ENCODE measurements at regions of chr1 and their contacts with region 1.

Region 1: DNA sequence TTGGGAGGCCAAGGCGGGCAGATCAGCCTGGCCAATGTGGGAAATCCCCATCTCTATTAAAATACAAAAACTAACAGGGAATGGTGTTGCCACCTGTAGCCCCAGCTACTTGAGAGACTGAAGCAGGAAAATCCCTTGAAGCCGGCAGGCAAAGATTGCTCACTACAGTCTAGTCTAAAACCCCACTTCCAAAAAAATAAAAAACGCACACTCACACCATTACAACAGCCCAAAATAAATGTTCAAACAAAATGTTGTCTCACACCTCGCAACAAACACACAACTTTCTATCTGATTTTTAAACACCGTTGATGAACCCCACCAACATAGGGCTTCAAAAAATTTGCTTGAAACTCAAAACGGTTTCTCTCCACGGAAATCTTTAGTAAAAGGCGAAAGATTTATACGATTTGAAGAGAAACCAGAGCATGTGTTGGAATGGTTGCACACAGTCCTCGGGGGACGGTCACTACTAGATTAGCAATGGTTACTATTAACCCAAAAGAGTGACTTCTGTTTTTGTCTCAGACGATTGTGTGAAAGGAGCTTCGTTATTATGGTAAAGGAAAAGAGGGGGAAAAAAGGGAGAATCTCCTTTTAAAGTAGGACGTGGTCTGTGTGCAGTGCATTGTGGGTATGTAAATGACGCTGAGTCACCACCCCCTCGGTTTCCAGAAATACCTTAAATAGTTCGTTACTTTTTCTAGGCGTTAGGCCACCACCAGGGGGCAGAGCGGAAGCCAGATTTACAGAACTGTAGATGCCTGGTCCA is at the start of gene RNU5D-1:
- DNase-seq: peak; percentile 97
- ATAC-seq: peak; percentile 74
- H3K4me3 ChIP-seq: peak within 1 kb of the TSS; percentile 17 to 68 (median 50)
- H3K4me3 Mint-ChIP-seq: peak within 1 kb of the TSS; percentile 92
- H3K27ac ChIP-seq: peak within 1 kb of the TSS; percentile 93 to 96
- H3K27ac Mint-ChIP-seq: peak within 1 kb of the TSS; percentile 100
- H3K4me1 ChIP-seq: peaks cover 12 to 24% of the 10 kb centered on the region in 2 donors
- H3K4me1 Mint-ChIP-seq: peaks cover 24% of the 10 kb centered on the region
- H3K27me3 ChIP-seq: no peaks in the 10 kb centered on the region
- H3K27me3 Mint-ChIP-seq: no peaks in the 10 kb centered on the region
- CTCF ChIP-seq: peak; percentile 87
- total RNA-seq, gene RNU5D-1: not detected in 2 replicates

Region 2: GRCh38 chr1:44598167-44598566 is 132.8 kb before region 1 on chr1:
- CTCF ChIA-PET with region 1: no interaction called
- POLR2A ChIA-PET with region 1: no interaction called
- intact Hi-C with region 1: no loop called
- DNase-seq: no peak
- ATAC-seq: no peak
- H3K4me3 ChIP-seq: no peak overlapping the region
- H3K4me3 Mint-ChIP-seq: no peak overlapping the region
- H3K27ac ChIP-seq: no peak overlapping the region
- H3K27ac Mint-ChIP-seq: no peak overlapping the region
- H3K4me1 ChIP-seq: peaks cover 0 to 3% of the 10 kb centered on the region in 2 donors
- H3K4me1 Mint-ChIP-seq: no peaks in the 10 kb centered on the region
- H3K27me3 ChIP-seq: no peaks in the 10 kb centered on the region
- H3K27me3 Mint-ChIP-seq: peaks cover 7% of the 10 kb centered on the region
- CTCF ChIP-seq: no peak

Region 3: DNA sequence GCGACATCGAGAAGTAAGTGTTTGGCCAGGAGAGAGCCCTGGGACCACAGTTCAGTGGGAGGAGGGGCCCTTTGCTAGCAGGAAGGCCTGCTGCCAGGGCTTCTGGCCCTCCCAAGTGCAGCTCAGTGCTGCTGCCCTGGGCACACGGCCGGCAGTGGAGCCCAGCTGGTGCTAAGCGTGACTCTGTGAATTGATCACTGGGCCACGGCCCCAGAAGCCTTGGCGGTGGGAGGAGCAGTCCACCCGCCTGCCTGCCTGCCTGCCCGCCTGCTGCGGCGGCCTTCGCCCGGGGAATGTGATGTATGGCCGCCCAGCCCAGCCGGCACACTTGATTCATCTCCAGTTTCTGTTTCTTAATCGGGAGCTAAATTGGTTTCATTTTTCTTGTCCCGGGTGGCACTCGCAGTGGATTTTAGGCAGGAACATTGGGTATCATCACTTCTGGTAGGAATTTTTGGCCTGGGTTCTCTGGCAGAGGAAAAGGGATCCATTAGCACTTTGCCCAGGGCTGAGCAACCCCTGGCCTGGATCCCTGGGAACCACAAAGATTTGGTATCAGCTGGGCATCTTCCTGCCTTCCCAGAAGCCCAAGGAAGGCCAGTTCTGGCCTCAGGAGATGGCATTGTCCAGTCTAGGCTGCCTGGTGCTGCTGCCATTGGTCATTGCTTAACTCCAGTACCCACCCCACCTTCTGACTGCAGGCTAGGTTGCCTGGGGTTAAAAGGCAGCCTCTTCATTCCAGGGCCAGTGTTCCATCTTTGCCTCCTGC is 85.3 kb before region 1 on chr1:
- CTCF ChIA-PET with region 1: no interaction called
- POLR2A ChIA-PET with region 1: no interaction called
- intact Hi-C with region 1: no loop called
- DNase-seq: no peak
- ATAC-seq: no peak
- H3K4me3 ChIP-seq: no peak overlapping the region
- H3K4me3 Mint-ChIP-seq: no peak overlapping the region
- H3K27ac ChIP-seq: no peak overlapping the region
- H3K27ac Mint-ChIP-seq: no peak overlapping the region
- H3K4me1 ChIP-seq: no peaks in the 10 kb centered on the region
- H3K4me1 Mint-ChIP-seq: no peaks in the 10 kb centered on the region
- H3K27me3 ChIP-seq: no peaks in the 10 kb centered on the region
- H3K27me3 Mint-ChIP-seq: no peaks in the 10 kb centered on the region
- CTCF ChIP-seq: no peak

Region 4: DNA sequence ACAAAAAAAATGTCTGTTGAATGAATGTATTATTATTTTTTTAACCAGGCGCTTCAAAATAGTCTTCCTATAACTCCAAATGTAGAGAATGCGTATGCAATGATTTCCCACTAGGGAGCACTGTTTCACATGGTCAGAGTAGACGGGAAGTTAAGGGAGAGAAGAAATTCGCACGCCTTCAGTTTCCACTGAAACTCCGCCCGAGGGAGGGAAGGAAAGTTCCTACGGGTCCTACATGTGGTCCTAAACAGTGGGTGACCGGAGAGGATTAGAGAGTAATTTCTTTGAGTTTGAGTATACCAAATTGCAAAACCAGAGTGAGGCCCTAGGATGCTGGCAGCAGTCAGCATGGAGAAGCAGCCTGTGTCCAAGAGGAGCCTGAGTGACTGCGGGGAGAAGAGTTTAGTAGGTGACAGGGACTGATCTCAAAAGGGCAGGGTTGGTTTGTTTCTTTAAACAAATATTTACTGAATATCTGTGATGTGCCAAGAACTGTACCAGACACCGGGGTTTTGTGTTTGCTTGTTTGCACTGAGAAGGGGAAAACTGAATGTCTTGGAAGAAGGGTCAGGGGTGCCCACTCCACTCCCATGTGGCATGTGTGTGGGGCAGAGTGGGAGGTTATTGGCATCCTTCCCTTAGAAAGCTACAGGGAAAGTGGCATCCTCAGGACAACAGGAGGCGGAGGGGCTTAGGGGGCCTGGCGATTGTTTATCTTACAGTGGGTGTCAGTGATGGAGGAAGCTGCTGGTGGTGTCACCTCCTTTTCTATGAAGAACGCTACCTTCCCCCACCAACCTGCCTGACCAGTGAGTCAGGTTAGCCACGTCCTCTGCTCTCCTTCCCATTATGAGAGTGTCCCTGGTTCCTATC is 22.7 kb before region 1 on chr1:
- CTCF ChIA-PET with region 1: interaction called, 196 read pairs
- POLR2A ChIA-PET with region 1: interaction called, 20 read pairs
- intact Hi-C with region 1: loop called (anchors 1 kb)
- DNase-seq: peak; percentile 76
- ATAC-seq: peak; percentile 76
- H3K4me3 ChIP-seq: peak overlapping the region in 4 of 5 experiments; percentile 9 to 26 (median 14)
- H3K4me3 Mint-ChIP-seq: peak overlapping the region; percentile 59
- H3K27ac ChIP-seq: no peak overlapping the region
- H3K27ac Mint-ChIP-seq: peak overlapping the region; percentile 54
- H3K4me1 ChIP-seq: peaks cover 27 to 30% of the 10 kb centered on the region in 2 donors
- H3K4me1 Mint-ChIP-seq: peaks cover 25% of the 10 kb centered on the region
- H3K27me3 ChIP-seq: no peaks in the 10 kb centered on the region
- H3K27me3 Mint-ChIP-seq: no peaks in the 10 kb centered on the region
- CTCF ChIP-seq: peak; percentile 85

Region 5: GRCh38 chr1:44714944-44715571 is 15.9 kb before region 1 on chr1:
- CTCF ChIA-PET with region 1: interaction called, 196 read pairs
- POLR2A ChIA-PET with region 1: interaction called, 20 read pairs
- intact Hi-C with region 1: loop called (anchors 1 kb)
- DNase-seq: peak; percentile 87
- ATAC-seq: peak; percentile 82
- H3K4me3 ChIP-seq: no peak overlapping the region
- H3K4me3 Mint-ChIP-seq: peak overlapping the region; percentile 64
- H3K27ac ChIP-seq: peak overlapping the region in 1 of 2 donors; percentile 56
- H3K27ac Mint-ChIP-seq: peak overlapping the region; percentile 86
- H3K4me1 ChIP-seq: peaks cover 50 to 53% of the 10 kb centered on the region in 2 donors
- H3K4me1 Mint-ChIP-seq: peaks cover 63% of the 10 kb centered on the region
- H3K27me3 ChIP-seq: no peaks in the 10 kb centered on the region
- H3K27me3 Mint-ChIP-seq: no peaks in the 10 kb centered on the region
- CTCF ChIP-seq: peak; percentile 92

Region 6: DNA sequence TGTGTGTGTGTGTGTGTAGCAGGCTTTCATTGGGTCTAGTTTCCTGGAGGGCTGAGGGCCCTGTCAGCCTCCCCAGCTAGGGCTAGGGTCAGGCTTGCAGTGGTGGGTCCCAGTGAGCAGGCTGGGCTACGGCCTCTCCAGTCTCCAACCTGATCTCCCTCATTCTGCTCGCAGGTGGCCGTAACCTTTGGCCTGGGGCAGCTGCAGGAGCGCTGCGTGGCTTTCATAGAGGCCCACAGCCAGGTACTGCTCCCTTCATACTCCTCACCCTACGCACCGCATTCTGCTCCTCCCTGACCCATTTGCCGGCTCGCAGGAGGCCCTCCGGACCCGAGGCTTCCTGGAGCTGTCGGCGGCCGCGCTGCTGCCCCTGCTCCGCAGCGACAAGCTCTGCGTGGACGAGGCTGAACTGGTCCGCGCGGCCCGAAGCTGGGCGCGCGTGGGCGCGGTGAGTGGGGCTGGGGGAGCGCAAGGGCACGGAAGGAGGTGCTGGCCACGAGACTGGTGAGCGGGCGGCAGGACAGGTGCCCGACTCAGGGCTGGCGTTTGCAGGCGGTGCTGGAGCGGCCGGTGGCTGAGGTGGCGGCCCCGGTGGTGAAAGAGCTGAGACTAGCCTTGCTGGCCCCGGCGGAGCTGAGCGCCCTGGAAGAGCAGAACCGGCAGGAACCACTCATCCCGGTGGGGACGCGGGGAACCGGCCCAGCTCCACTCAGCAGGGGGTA is 82.1 kb after region 1 on chr1:
- CTCF ChIA-PET with region 1: interaction called, 10 read pairs
- POLR2A ChIA-PET with region 1: interaction called, 14 read pairs
- intact Hi-C with region 1: no loop called
- DNase-seq: no peak
- ATAC-seq: no peak
- H3K4me3 ChIP-seq: peak overlapping the region in 4 of 5 experiments; percentile 51 to 76 (median 68)
- H3K4me3 Mint-ChIP-seq: peak overlapping the region; percentile 92
- H3K27ac ChIP-seq: peak overlapping the region; percentile 70 to 86
- H3K27ac Mint-ChIP-seq: peak overlapping the region; percentile 37
- H3K4me1 ChIP-seq: peaks cover 38 to 53% of the 10 kb centered on the region in 2 donors
- H3K4me1 Mint-ChIP-seq: peaks cover 58% of the 10 kb centered on the region
- H3K27me3 ChIP-seq: no peaks in the 10 kb centered on the region
- H3K27me3 Mint-ChIP-seq: no peaks in the 10 kb centered on the region
- CTCF ChIP-seq: no peak

Region 7: GRCh38 chr1:44819608-44820327 is 88.8 kb after region 1 on chr1:
- CTCF ChIA-PET with region 1: interaction called, 10 read pairs
- POLR2A ChIA-PET with region 1: interaction called, 14 read pairs
- intact Hi-C with region 1: loop called (anchors 1 kb)
- DNase-seq: peak; percentile 95
- ATAC-seq: peak; percentile 82
- H3K4me3 ChIP-seq: peak overlapping the region; percentile 56 to 80 (median 66)
- H3K4me3 Mint-ChIP-seq: peak overlapping the region; percentile 93
- H3K27ac ChIP-seq: peak overlapping the region; percentile 99 to 100
- H3K27ac Mint-ChIP-seq: peak overlapping the region; percentile 100
- H3K4me1 ChIP-seq: peaks cover 16 to 24% of the 10 kb centered on the region in 2 donors
- H3K4me1 Mint-ChIP-seq: peaks cover 35% of the 10 kb centered on the region
- H3K27me3 ChIP-seq: no peaks in the 10 kb centered on the region
- H3K27me3 Mint-ChIP-seq: no peaks in the 10 kb centered on the region
- CTCF ChIP-seq: no peak